Activated CD8-positive, alpha-beta memory T cell treated with anti-CD3 and anti-CD28 coated beads, Interleukin-2, amount 10 ng/mL, durations not matched to agents 7 days and 5 days (primary cell): ENCODE measurements at regions of chr6 and their contacts with region 1.

Region 1: GRCh38 chr6:2209226-2209809 is 36.1 kb downstream of the GMDS start:
- DNase-seq: peak; percentile 59
- ATAC-seq: peak; percentile 55
- H3K4me3 Mint-ChIP-seq: no peak overlapping the region
- H3K27ac Mint-ChIP-seq: no peak overlapping the region
- H3K4me1 Mint-ChIP-seq: no peaks in the 10 kb centered on the region
- H3K27me3 Mint-ChIP-seq: peaks cover 7% of the 10 kb centered on the region

Region 2: GRCh38 chr6:1596088-1596852 is 613.0 kb before region 1 on chr6:
- CTCF ChIA-PET with region 1: interaction called, 11 read pairs
- DNase-seq: peak; percentile 67
- ATAC-seq: peak; percentile 75
- H3K4me3 Mint-ChIP-seq: no peak overlapping the region
- H3K27ac Mint-ChIP-seq: no peak overlapping the region
- H3K4me1 Mint-ChIP-seq: peaks cover 3% of the 10 kb centered on the region
- H3K27me3 Mint-ChIP-seq: peaks cover 64% of the 10 kb centered on the region

Region 3: DNA sequence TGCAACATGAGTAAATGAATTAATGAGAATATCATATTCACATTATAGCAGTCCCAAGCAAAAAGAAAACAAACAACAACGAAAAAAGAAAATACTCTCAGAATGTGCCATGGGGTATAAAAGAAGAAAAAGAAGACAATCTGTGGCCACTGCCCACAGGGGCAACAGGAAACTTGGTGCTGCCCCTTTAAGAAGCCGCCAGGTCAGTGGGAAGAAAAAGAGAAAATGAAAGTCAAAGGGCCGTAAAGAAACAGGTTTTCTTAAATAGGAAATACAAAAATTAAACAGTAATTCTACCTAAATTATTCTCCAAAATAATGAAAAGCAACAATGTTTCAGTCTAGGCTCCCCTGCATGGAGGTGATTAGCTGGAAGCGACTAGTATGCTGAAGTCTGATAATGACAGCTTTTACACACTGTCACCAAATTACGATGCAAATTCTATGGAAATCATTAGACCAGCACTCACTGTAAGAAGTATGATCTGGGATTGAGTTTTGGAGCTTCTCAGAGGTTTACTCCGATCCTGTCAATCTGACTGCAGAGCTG is 12.5 kb after region 1 on chr6:
- CTCF ChIA-PET with region 1: interaction called, 13 read pairs
- DNase-seq: no peak
- ATAC-seq: peak; percentile 62
- H3K4me3 Mint-ChIP-seq: peak overlapping the region; percentile 73
- H3K27ac Mint-ChIP-seq: peak overlapping the region; percentile 86
- H3K4me1 Mint-ChIP-seq: peaks cover 14% of the 10 kb centered on the region
- H3K27me3 Mint-ChIP-seq: no peaks in the 10 kb centered on the region